Activated CD8-positive, alpha-beta T cell treated with anti-CD3 and anti-CD28 coated beads for 36 hours (primary cell): ENCODE measurements at regions of chr11 and their contacts with region 1.

Region 1: DNA sequence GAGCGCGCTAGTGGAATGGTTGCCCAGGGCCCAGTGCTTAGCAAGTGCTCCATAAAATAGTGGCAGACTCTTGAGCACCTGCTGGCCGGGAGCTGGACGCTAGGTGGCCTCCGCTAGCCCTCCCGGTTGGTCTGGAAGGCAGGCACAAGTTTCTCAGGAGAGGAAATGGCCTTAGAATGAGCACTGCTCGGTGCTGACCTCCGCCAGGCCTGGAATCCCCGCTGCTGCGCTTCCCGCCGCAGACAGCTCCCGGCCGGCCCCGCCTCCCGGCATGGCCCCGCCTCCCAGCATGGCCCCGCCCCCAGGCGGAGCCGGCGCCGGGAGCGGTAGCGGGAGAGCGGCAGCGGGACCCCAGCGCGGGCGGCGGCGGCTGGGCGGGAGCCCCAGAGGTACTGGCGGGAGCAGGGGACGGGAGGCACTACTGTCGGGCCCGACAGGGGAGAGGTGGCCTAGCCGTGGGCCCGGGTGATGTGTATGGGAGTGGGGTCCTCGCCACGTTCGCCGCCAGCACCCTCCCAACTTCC is at the start of gene SIPA1:
- DNase-seq: peak; percentile 75
- ATAC-seq: peak; percentile 63
- H3K4me3 Mint-ChIP-seq: peak within 1 kb of the TSS; percentile 77
- H3K27ac Mint-ChIP-seq: peak within 1 kb of the TSS; percentile 90
- H3K4me1 Mint-ChIP-seq: peaks cover 30% of the 10 kb centered on the region
- H3K27me3 Mint-ChIP-seq: no peaks in the 10 kb centered on the region
- CTCF ChIP-seq: no peak
- total RNA-seq, gene SIPA1: 172 to 180 TPM

Region 2: GRCh38 chr11:65625628-65626342 is 12.1 kb before region 1 on chr11:
- CTCF ChIA-PET with region 1: interaction called, 17 read pairs
- POLR2A ChIA-PET with region 1: interaction called, 31 read pairs
- intact Hi-C with region 1: no loop called
- DNase-seq: peak; percentile 68
- ATAC-seq: peak; percentile 93
- H3K4me3 Mint-ChIP-seq: no peak overlapping the region
- H3K27ac Mint-ChIP-seq: no peak overlapping the region
- H3K4me1 Mint-ChIP-seq: peaks cover 3% of the 10 kb centered on the region
- H3K27me3 Mint-ChIP-seq: no peaks in the 10 kb centered on the region
- CTCF ChIP-seq: peak; percentile 69